Pancreas (tissue), 10 donors: ENCODE measurements at regions of chr22 and their contacts with region 1.

Region 1: DNA sequence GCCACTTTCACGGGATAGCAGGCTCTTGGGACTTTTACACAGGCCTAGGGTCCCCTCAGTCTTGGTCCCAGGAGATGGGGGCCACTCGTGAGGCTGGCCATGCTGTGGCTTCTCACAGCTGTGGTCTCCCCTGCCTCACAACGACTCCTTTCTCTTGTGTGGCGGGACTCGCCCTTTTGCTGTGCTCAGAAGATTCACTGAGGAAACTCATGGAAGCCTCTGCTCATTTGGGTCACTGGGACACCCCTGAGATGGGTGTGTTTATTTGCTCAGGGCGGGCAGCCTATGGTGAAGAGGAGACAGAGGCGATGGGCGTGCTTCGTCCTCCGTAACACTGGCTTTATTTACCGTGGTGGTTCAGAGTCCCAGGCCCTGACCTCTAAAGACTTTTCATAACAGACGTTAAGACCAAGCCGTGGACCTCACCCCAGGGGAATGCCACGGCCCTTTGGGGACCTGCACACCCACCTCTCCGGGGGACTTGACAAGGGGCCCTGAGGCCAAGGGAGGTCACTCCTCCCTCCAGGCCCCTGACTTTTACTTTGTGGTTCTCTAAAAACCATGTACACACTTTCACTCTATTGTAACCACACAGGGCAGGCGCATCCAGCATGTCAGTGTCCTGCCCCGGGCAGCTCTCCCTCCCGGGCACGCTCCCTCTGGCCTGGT is 15.5 kb downstream of the TEF start:
- DNase-seq: peak in 1 of 6 donors; percentile 31
- ATAC-seq: no peak
- H3K4me3 ChIP-seq: no peak overlapping the region
- H3K27ac ChIP-seq: no peak overlapping the region
- H3K4me1 ChIP-seq: peaks cover 0 to 7% (median 2%) of the 10 kb centered on the region in 3 donors
- H3K27me3 ChIP-seq: no peaks in the 10 kb centered on the region
- CTCF ChIP-seq: no peak

Region 2: DNA sequence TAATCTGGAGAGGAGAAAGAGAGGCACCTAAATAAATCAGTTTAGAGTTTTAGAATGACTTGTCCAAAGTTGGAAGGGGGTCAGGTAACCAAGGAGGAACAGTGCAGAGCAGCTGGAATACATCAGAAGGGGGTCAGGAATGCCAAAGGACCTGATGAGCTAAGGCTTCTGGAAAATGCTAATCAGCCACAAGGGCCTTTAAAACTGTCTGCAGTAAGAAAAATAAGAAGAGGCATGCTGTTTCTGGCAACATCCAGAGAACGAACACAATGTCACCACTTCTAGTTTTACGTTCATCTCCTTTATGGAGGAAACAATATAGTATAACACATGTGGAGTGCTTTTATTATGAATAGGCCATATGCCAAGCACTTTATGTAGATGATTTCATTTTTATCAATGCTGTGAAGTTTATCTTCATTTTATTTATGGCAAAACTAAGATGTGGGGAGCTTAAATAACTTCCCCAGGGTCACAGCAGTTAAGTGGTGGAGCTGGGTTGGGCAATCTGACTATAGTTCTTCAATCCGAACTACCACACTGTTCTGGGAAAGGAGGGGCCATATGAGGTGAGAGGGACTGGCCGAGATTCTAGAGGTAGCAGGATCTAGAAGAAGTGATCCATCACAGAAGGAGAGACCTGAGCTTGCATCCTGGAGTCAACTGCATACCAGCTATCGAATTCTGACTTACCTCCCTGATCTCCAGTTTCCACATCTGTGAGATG is 94.3 kb after region 1 on chr22:
- intact Hi-C with region 1: no loop called
- DNase-seq: no peak
- ATAC-seq: no peak
- H3K4me3 ChIP-seq: no peak overlapping the region
- H3K27ac ChIP-seq: no peak overlapping the region
- H3K4me1 ChIP-seq: peaks cover 0 to 21% (median 3%) of the 10 kb centered on the region in 3 donors
- H3K27me3 ChIP-seq: no peaks in the 10 kb centered on the region
- CTCF ChIP-seq: no peak

Region 3: DNA sequence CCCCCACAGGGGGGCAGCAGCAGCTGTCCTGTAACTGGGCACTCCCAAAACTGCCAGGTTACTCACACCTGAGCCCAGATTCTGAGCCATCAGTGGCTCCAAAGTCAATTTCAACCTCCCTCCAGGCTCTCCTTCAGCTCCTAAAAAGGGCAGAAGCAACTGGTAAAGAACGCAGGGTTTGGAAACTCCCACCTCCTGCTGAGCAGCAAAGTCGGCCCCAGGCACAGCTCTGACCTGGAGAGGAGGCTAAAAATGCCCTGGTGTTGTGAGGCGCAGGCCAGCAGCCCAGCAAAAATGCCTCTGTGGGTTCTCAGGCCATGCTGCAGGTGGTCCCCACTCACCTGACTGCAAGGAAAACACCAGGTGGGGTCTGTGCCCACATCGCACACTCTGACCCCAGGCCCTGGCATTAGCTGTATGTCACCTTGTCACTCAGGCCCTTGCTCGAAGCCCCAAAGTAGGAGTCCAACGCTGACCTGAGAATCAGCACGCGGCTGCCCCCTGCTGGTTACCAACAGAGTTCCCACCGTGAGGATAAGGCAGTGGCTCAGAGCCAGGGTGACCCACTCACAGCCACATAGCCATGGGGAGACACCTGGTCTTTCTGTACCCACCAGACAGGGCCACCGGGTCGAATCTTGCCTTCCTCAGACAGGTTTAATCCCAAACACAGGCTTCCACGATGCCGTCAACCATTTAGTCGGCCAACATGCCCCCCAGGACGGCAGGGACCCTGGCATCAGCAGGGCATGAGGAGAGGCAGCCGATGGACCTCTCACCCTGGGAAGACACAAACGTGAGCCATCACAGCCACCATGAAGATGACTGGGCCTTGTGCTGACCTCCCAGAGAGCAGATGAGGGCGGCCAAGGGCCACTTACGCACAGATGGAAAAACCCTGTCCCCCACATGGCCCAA is 135.9 kb after region 1 on chr22:
- intact Hi-C with region 1: loop called in 2 of 3 experiments (anchors 5 to 10 kb)
- DNase-seq: peak; percentile 58 to 88 (median 80)
- ATAC-seq: peak; percentile 70 to 82 (median 76)
- H3K4me3 ChIP-seq: no peak overlapping the region
- H3K27ac ChIP-seq: no peak overlapping the region
- H3K4me1 ChIP-seq: no peaks in the 10 kb centered on the region
- H3K27me3 ChIP-seq: no peaks in the 10 kb centered on the region
- CTCF ChIP-seq: peak; percentile 66 to 76 (median 72)

Region 4: GRCh38 chr22:41589391-41590241 is 192.3 kb after region 1 on chr22 and contains the start of gene PMM1:
- intact Hi-C with region 1: loop called in 1 of 3 experiments (anchors 10 kb)
- DNase-seq: peak; percentile 100
- ATAC-seq: peak; percentile 89 to 97 (median 89)
- H3K4me3 ChIP-seq: peak within 1 kb of the TSS; percentile 51 to 89 (median 71)
- H3K27ac ChIP-seq: peak within 1 kb of the TSS; percentile 49 to 86 (median 81)
- H3K4me1 ChIP-seq: peaks cover 14 to 15% (median 15%) of the 10 kb centered on the region in 3 donors
- H3K27me3 ChIP-seq: no peaks in the 10 kb centered on the region
- CTCF ChIP-seq: no peak
- total RNA-seq, gene PMM1: 10.3 to 26.6 (median 20.2) TPM